Heart right ventricle (tissue), 16 donors: ENCODE measurements at regions of chr10 and their contacts with region 1.

Region 1: GRCh38 chr10:82420001-82420400 is 545.0 kb downstream of the NRG3 start:
- DNase-seq: no peak
- ATAC-seq: no peak
- H3K4me3 ChIP-seq: no peak overlapping the region
- H3K27ac ChIP-seq: no peak overlapping the region
- H3K4me1 ChIP-seq: no peaks in the 10 kb centered on the region
- H3K27me3 ChIP-seq: no peaks in the 10 kb centered on the region
- CTCF ChIP-seq: no peak

Region 2: DNA sequence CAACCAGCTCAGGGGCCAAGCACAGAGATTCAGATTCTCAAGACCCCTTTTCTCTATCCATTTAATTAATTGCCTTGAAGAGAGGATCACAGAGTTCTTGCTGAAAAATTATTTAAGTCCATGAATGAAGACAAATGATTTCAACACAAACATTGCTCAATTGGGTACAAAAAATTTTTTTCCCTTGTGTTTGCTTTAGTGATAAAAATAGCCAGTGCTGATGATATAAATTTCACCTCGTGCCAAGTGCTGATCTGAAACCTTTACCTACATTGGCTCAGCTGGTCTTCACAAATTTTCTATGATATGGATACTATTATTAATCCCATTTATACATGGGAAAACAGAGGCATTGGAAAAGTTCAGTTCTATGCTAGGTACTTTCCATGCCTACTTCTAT is 167.9 kb before region 1 on chr10:
- intact Hi-C with region 1: no loop called
- DNase-seq: no peak
- ATAC-seq: no peak
- H3K4me3 ChIP-seq: no peak overlapping the region
- H3K27ac ChIP-seq: no peak overlapping the region
- H3K4me1 ChIP-seq: no peaks in the 10 kb centered on the region
- H3K27me3 ChIP-seq: no peaks in the 10 kb centered on the region
- CTCF ChIP-seq: no peak

Region 3: DNA sequence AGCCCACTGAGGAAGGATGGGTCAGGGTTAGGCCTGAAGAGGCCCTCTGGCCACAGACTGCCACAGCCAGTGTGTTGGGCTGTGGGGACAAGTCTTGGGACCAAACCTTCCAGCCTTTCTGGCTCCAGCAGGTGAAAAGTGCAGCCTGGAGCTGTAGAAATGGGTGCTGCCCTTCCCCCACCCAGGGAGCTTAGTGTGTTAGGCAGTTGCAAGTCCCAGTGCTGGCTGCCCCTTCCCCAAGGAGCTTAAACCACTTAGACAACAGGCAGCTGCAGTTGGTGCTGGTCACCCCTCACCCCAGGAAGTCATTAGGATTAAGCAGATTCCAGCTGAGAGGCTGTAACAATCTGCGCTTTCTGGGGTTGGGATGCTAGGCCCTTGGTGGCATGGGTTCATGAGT is 18.3 kb after region 1 on chr10:
- intact Hi-C with region 1: loop called in 1 of 10 experiments (anchors 1 kb)
- DNase-seq: no peak
- ATAC-seq: no peak
- H3K4me3 ChIP-seq: no peak overlapping the region
- H3K27ac ChIP-seq: no peak overlapping the region
- H3K4me1 ChIP-seq: no peaks in the 10 kb centered on the region
- H3K27me3 ChIP-seq: no peaks in the 10 kb centered on the region
- CTCF ChIP-seq: no peak